IMR-90 (cell line): ENCODE measurements at regions of chr12 and their contacts with region 1.

Region 1: DNA sequence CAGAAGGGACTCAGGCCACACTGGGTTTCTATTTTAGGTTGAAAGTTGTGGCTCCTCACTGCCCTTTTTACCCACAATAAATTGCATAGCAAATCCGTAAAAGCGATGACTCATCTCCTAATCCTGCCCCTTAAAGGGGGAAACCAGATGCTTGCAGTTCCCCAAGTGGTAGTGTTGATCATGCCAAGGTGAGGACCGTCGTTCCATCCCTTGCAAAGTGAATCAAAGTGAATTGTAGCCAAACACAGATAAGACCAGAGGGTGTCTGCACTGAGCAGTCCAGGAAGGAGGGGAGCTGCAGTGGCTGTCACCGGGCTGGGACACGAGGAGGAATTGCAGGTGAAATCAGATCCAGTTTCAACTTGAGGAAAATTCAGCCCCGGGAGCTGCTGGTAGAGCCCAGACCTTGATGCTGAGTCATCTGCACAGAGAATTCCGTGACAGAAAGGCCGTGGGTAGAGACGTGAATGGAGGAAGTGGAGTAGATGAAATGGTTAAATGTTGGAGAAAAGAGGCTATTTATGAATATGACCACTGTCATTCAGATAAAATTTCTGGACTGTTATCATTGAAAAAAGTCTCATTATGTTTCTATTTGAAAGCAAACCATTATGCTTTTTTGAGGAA is 44.2 kb upstream of the MMP17 start:
- DNase-seq: peak; percentile 86
- ATAC-seq: peak; percentile 80
- H3K4me3 ChIP-seq: peak overlapping the region; percentile 41; the same call in 1 of the 2 replicates
- H3K27ac ChIP-seq: peak overlapping the region; percentile 71
- H3K4me1 ChIP-seq: peaks cover 5% of the 10 kb centered on the region; the same call in 1 of the 2 replicates
- H3K27me3 ChIP-seq: no peaks in the 10 kb centered on the region
- CTCF ChIP-seq: no peak
- POLR2A ChIP-seq: no peak
- RAD21 ChIP-seq: no peak

Region 2: DNA sequence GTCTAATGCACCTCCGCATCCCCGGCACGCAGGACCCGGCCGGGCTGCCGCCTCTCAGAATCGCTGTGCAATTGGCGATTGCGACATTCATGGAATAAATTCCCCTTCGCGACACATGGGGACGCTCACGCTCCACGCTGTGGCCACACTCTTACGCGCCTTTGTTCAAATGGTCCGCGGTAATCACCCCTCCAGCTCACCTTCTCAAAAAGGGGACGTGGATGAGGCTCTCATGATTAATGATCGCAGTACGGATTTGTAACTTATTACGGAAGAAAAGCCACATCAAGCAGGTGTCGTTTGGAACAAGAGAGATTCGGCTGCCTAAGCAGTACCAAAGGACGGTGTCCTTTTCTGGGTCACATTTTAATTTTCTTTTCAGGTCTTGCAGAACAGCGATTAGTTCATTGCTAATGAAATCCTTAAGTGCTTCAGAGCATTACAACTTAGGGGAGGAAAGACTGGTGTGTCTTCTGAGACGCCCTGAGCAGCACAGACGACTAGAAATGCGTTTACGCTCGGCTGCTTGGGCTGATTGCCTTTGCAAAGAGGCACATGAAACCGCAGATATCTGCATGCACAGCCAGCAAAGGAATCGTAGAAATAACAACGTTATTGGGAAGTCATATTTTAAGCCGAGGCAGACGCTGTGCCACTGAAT is 867.6 kb before region 1 on chr12:
- CTCF ChIA-PET with region 1: no interaction called
- POLR2A ChIA-PET with region 1: no interaction called
- dilution Hi-C with region 1: no loop called
- in situ Hi-C with region 1: no loop called
- intact Hi-C with region 1: loop called (anchors 5 kb)
- DNase-seq: peak; percentile 28
- ATAC-seq: peak; percentile 79
- H3K4me3 ChIP-seq: no peak overlapping the region
- H3K27ac ChIP-seq: no peak overlapping the region
- H3K4me1 ChIP-seq: 0 out of 2 replicates have a peak, but pooled peaks cover 1% of the 10 kb centered on the region
- H3K27me3 ChIP-seq: peaks cover 3% of the 10 kb centered on the region
- CTCF ChIP-seq: peak; percentile 75
- POLR2A ChIP-seq: no peak
- RAD21 ChIP-seq: peak; percentile 80

Region 3: GRCh38 chr12:131720921-131721320 is 63.1 kb before region 1 on chr12:
- CTCF ChIA-PET with region 1: no interaction called
- POLR2A ChIA-PET with region 1: no interaction called
- dilution Hi-C with region 1: no loop called
- in situ Hi-C with region 1: no loop called
- intact Hi-C with region 1: no loop called
- DNase-seq: no peak
- ATAC-seq: no peak
- H3K4me3 ChIP-seq: no peak overlapping the region
- H3K27ac ChIP-seq: peak overlapping the region; percentile 24; the same call in 1 of the 2 replicates
- H3K4me1 ChIP-seq: no peaks in the 10 kb centered on the region
- H3K27me3 ChIP-seq: no peaks in the 10 kb centered on the region
- CTCF ChIP-seq: no peak
- POLR2A ChIP-seq: no peak
- RAD21 ChIP-seq: no peak

Region 4: DNA sequence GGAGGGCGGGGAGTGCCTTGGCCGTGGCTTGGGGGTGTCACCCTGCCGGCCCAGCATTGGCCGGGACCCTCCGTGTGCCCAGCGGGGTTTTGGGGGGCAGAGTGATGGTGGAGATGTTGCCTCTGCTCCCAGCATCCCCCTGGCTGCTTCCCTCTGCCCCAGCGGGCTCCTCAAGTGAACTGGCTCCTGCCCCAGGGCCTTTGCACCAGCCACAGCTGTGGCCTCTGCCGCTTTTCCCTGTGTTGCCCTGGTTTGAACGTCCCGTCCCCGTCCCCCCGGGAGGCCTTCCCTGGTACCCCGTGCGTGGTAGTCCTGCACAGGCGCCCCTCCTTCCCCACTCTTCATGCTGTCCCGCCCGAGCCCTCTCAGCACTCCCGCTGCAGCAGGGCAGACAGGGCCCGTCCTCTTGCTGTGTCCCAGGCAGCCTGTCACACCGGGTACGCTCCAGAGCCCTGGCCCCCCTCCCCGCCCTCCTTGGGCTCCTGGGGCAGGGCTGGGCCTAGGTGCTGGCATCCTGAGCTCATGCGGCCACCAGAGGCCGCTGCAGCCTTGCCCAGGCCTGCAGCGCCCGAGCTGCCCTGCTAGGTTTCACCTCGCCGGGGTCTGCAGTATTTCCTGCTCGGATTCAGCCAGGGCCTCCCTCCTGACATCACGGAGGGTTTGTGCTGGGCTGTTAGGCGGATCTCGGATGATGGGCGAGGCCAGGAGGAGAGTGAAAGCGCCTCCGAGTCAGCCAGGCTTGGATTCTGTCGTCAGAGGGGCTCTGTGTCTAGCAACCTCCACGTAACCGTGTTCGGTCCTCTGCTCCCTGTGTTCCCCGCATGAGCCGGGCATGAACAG is 369.7 kb after region 1 on chr12:
- CTCF ChIA-PET with region 1: no interaction called
- POLR2A ChIA-PET with region 1: no interaction called
- dilution Hi-C with region 1: no loop called
- in situ Hi-C with region 1: no loop called
- intact Hi-C with region 1: no loop called
- DNase-seq: peak; percentile 61
- ATAC-seq: peak; percentile 99
- H3K4me3 ChIP-seq: no peak overlapping the region
- H3K27ac ChIP-seq: no peak overlapping the region
- H3K4me1 ChIP-seq: no peaks in the 10 kb centered on the region
- H3K27me3 ChIP-seq: no peaks in the 10 kb centered on the region
- CTCF ChIP-seq: peak; percentile 93
- POLR2A ChIP-seq: 0 out of 2 replicates have a peak, but pooled peaks have one; percentile 37
- RAD21 ChIP-seq: peak; percentile 97